B cell (primary cell): ENCODE measurements at regions of chr13 and their contacts with region 1.

Region 1: DNA sequence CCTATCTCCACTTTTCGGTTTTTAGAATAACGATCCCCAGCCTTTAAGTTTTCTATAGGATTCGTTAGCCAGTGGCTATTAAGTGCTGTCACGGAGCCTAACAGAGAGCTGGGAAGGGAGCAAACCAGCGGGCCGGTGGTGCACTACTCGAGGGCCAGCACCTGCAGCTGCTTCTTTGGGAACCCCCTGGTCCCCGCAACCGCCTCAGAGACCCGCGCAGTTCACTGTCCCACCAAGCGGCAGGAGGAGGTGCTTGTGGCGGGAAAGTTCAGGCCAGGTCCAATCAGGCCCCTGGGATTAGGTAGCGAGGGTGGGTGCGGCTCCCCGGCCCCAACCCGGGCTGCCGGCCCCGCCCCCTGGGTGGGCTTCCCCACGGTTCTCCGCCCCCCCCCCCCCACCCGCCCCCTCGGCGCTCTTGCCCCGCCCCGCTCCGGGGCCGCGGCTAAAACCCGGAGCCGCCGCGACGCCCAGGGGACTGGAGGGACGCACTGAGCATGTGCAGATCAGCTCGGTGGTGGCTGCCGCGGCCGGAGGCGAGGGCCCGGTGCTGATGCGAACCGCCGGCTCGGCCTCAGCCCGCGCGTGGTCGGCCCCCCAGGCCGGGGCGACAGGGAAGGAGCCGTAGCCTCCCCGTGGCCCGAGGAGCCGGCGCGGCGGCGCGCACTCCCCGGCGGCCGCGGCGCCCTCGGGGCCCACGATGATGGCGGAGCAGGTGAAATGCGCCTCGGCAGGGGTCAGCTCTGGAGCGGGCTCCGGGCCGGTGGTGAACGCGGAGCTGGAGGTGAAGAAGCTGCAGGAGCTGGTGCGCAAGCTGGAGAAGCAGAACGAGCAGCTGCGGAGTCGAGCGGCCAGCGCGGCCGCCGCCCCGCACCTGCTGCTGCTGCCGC is at the start of gene SLAIN1:
- DNase-seq: peak; percentile 91
- ATAC-seq: peak; percentile 87
- H3K4me3 ChIP-seq: peak within 1 kb of the TSS; percentile 71 to 97 (median 80)
- H3K4me3 Mint-ChIP-seq: peak within 1 kb of the TSS; percentile 97
- H3K27ac ChIP-seq: peak within 1 kb of the TSS; percentile 71 to 84
- H3K27ac Mint-ChIP-seq: peak within 1 kb of the TSS; percentile 79
- H3K4me1 ChIP-seq: peaks cover 16 to 18% of the 10 kb centered on the region in 2 donors
- H3K4me1 Mint-ChIP-seq: peaks cover 26% of the 10 kb centered on the region
- H3K27me3 ChIP-seq: no peaks in the 10 kb centered on the region
- H3K27me3 Mint-ChIP-seq: no peaks in the 10 kb centered on the region
- CTCF ChIP-seq: no peak
- total RNA-seq, gene SLAIN1: 25.2 and 29.5 TPM in 2 replicates

Region 2: GRCh38 chr13:76991796-76992547 is 705.5 kb before region 1 on chr13 and contains the start of gene CLN5:
- CTCF ChIA-PET with region 1: no interaction called
- POLR2A ChIA-PET with region 1: no interaction called
- intact Hi-C with region 1: loop called (anchors 2 kb)
- DNase-seq: peak; percentile 98
- ATAC-seq: peak; percentile 94
- H3K4me3 ChIP-seq: peak within 1 kb of the TSS; percentile 78 to 90 (median 86)
- H3K4me3 Mint-ChIP-seq: peak within 1 kb of the TSS; percentile 99
- H3K27ac ChIP-seq: peak within 1 kb of the TSS; percentile 88 to 93
- H3K27ac Mint-ChIP-seq: peak within 1 kb of the TSS; percentile 99
- H3K4me1 ChIP-seq: peaks cover 15 to 17% of the 10 kb centered on the region in 2 donors
- H3K4me1 Mint-ChIP-seq: peaks cover 28% of the 10 kb centered on the region
- H3K27me3 ChIP-seq: no peaks in the 10 kb centered on the region
- H3K27me3 Mint-ChIP-seq: peaks cover 5% of the 10 kb centered on the region
- CTCF ChIP-seq: no peak
- total RNA-seq, gene CLN5: 33.3 and 36.9 TPM in 2 replicates

Region 3: DNA sequence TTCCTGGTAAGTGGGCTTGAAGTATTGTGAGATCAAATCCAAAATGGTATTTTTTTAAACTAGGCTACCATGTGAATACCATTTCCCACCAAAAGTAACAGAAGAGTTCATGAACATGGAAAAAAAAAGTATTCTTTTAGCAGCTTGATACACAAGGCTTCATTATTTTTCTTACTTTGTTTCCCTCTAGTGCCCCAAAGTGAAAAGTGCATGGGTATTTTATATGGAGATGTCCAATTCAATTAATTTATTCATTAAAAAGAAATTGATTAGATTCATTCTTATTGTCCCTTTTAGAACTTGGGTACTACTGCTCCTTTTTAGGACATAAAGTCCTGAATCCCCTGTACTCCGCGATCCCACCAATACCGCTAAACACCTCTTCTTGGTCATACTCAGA is 190.6 kb before region 1 on chr13:
- CTCF ChIA-PET with region 1: no interaction called
- POLR2A ChIA-PET with region 1: no interaction called
- intact Hi-C with region 1: loop called (anchors 5 kb)
- DNase-seq: no peak
- ATAC-seq: no peak
- H3K4me3 ChIP-seq: no peak overlapping the region
- H3K4me3 Mint-ChIP-seq: no peak overlapping the region
- H3K27ac ChIP-seq: no peak overlapping the region
- H3K27ac Mint-ChIP-seq: no peak overlapping the region
- H3K4me1 ChIP-seq: peaks cover 20 to 22% of the 10 kb centered on the region in 2 donors
- H3K4me1 Mint-ChIP-seq: peaks cover 18% of the 10 kb centered on the region
- H3K27me3 ChIP-seq: peaks cover 0 to 4% (median 2%) of the 10 kb centered on the region in 4 experiments
- H3K27me3 Mint-ChIP-seq: peaks cover 4% of the 10 kb centered on the region
- CTCF ChIP-seq: peak; percentile 10

Region 4: GRCh38 chr13:77715233-77715891 is 17.9 kb after region 1 on chr13:
- CTCF ChIA-PET with region 1: no interaction called
- POLR2A ChIA-PET with region 1: no interaction called
- intact Hi-C with region 1: no loop called
- DNase-seq: no peak
- ATAC-seq: no peak
- H3K4me3 ChIP-seq: no peak overlapping the region
- H3K4me3 Mint-ChIP-seq: no peak overlapping the region
- H3K27ac ChIP-seq: no peak overlapping the region
- H3K27ac Mint-ChIP-seq: no peak overlapping the region
- H3K4me1 ChIP-seq: no peaks in the 10 kb centered on the region
- H3K4me1 Mint-ChIP-seq: peaks cover 12% of the 10 kb centered on the region
- H3K27me3 ChIP-seq: no peaks in the 10 kb centered on the region
- H3K27me3 Mint-ChIP-seq: no peaks in the 10 kb centered on the region
- CTCF ChIP-seq: no peak

Region 5: GRCh38 chr13:78603240-78603957 is 905.9 kb after region 1 on chr13 and contains the start of gene POU4F1:
- CTCF ChIA-PET with region 1: no interaction called
- POLR2A ChIA-PET with region 1: no interaction called
- intact Hi-C with region 1: loop called (anchors 10 kb)
- DNase-seq: peak; percentile 80
- ATAC-seq: peak; percentile 63
- H3K4me3 ChIP-seq: peak within 1 kb of the TSS; percentile 7 to 62 (median 38)
- H3K4me3 Mint-ChIP-seq: peak within 1 kb of the TSS; percentile 90
- H3K27ac ChIP-seq: no peak within 1 kb of the TSS
- H3K27ac Mint-ChIP-seq: peak within 1 kb of the TSS; percentile 80
- H3K4me1 ChIP-seq: peaks cover 51 to 84% of the 10 kb centered on the region in 2 donors
- H3K4me1 Mint-ChIP-seq: peaks cover 54% of the 10 kb centered on the region
- H3K27me3 ChIP-seq: peaks cover 11 to 92% (median 86%) of the 10 kb centered on the region in 4 experiments
- H3K27me3 Mint-ChIP-seq: peaks cover 82% of the 10 kb centered on the region
- CTCF ChIP-seq: no peak
- total RNA-seq, gene POU4F1: 0.17 TPM in 1 of 2 replicates, not detected in the other

Region 6: GRCh38 chr13:79393564-79394249 is 1696.2 kb after region 1 on chr13:
- CTCF ChIA-PET with region 1: no interaction called
- POLR2A ChIA-PET with region 1: no interaction called
- intact Hi-C with region 1: loop called (anchors 5 kb)
- DNase-seq: peak; percentile 90
- ATAC-seq: peak; percentile 92
- H3K4me3 ChIP-seq: peak overlapping the region in 4 of 5 experiments; percentile 7 to 51 (median 38)
- H3K4me3 Mint-ChIP-seq: peak overlapping the region; percentile 76
- H3K27ac ChIP-seq: peak overlapping the region; percentile 87 to 88
- H3K27ac Mint-ChIP-seq: peak overlapping the region; percentile 85
- H3K4me1 ChIP-seq: peaks cover 28 to 44% of the 10 kb centered on the region in 2 donors
- H3K4me1 Mint-ChIP-seq: peaks cover 62% of the 10 kb centered on the region
- H3K27me3 ChIP-seq: no peaks in the 10 kb centered on the region
- H3K27me3 Mint-ChIP-seq: no peaks in the 10 kb centered on the region
- CTCF ChIP-seq: no peak